ENCODE measurements at regions of chr9 and their contacts with region 1.

Region 1: GRCh38 chr9:99118782-99119466 is 14.0 kb downstream of the TGFBR1 start:
- DNase-seq: peak; percentile 81
- H3K4me3 ChIP-seq: peak overlapping the region; percentile 63
- H3K27ac ChIP-seq: peak overlapping the region; percentile 100
- H3K4me1 ChIP-seq: peaks cover 95% of the 10 kb centered on the region
- CTCF ChIP-seq: no peak

Region 2: GRCh38 chr9:99104459-99105151 is 14.3 kb before region 1 on chr9 and contains the start of gene TGFBR1:
- CTCF ChIA-PET with region 1: no interaction called
- POLR2A ChIA-PET with region 1: interaction called, 16 read pairs
- intact Hi-C with region 1: loop called (anchors 1 kb)
- DNase-seq: peak; percentile 95
- H3K4me3 ChIP-seq: peak within 1 kb of the TSS; percentile 78
- H3K27ac ChIP-seq: peak within 1 kb of the TSS; percentile 31
- H3K4me1 ChIP-seq: peaks cover 46% of the 10 kb centered on the region
- CTCF ChIP-seq: no peak
- total RNA-seq, gene TGFBR1: 13.6 and 14.3 TPM in 2 replicates

Region 3: GRCh38 chr9:99134893-99135341 is 16.0 kb after region 1 on chr9:
- CTCF ChIA-PET with region 1: no interaction called
- POLR2A ChIA-PET with region 1: interaction called, 53 read pairs
- intact Hi-C with region 1: no loop called
- DNase-seq: no peak
- H3K4me3 ChIP-seq: no peak overlapping the region
- H3K27ac ChIP-seq: no peak overlapping the region
- H3K4me1 ChIP-seq: peaks cover 46% of the 10 kb centered on the region
- CTCF ChIP-seq: no peak

Region 4: DNA sequence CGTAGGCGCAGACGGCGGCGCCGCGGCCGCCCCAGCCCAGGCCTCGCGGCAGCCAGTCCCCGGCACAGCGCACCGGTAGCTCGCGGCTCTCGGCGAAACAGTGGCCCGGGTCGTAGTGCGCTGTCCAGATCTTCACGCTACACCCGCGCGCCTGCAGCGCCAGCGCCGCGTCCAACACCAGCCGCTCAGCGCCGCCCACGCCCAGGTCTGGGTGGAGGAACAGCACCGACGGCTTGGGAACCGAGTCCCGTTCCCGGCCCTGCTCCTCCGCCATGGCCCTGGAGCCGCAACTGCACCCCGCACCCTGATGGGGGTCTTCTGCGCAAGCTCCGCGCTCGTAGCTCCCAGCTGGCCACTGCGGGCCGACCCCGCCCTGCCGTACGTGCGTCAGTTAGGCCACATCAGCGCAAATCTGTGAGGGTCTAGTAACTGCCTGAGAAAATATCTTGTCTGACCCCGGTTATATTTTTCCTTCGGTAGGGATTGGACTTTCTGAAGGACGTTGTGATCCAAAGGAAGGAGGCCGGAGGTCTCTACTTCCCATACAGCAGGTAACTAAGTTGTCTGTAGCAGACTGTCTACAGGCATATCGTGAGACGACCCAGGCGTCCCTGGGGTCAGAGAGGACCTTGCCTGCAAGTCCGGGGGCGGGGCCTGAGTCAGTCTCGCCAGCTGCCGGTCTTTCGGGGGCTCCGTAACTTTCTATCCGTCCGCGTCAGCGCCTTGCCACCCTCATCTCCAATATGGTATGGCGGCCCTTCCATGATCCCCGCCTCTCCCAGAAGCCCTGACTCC is 102.9 kb after region 1 on chr9 and contains the starts of genes ALG2 and SEC61B:
- CTCF ChIA-PET with region 1: no interaction called
- POLR2A ChIA-PET with region 1: interaction called, 5 read pairs
- intact Hi-C with region 1: loop called (anchors 5 kb)
- DNase-seq: peak; percentile 96
- H3K4me3 ChIP-seq: peak within 1 kb of the TSS; percentile 91
- H3K27ac ChIP-seq: peak within 1 kb of the TSS; percentile 72
- H3K4me1 ChIP-seq: peaks cover 35% of the 10 kb centered on the region
- CTCF ChIP-seq: no peak
- total RNA-seq, gene ALG2: 22.2 and 26.5 TPM in 2 replicates
- total RNA-seq, gene SEC61B: 97.5 and 106 TPM in 2 replicates

Region 5: DNA sequence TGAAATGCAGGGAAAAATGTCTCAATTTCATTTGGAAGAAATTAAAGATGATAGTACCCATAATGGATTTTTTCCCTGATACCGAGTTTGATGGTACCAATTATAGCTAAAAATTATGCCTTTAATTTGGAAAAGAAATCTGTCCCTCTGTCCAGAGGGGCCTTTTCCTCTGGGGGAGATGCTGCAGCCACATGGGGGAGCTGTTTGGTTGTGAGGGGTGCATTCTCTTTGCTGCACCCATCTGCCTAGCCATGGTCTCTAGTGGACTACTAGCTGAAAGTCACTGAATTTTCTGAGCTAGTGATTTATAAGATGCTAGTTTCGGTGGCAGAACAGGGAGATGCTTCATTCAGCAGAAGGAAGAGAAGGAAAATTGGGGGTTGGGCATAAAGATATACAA is 112.8 kb after region 1 on chr9:
- CTCF ChIA-PET with region 1: no interaction called
- POLR2A ChIA-PET with region 1: interaction called, 5 read pairs
- intact Hi-C with region 1: loop called (anchors 5 kb)
- DNase-seq: peak; percentile 58
- H3K4me3 ChIP-seq: no peak overlapping the region
- H3K27ac ChIP-seq: peak overlapping the region; percentile 6
- H3K4me1 ChIP-seq: peaks cover 59% of the 10 kb centered on the region
- CTCF ChIP-seq: peak; percentile 96

Region 6: DNA sequence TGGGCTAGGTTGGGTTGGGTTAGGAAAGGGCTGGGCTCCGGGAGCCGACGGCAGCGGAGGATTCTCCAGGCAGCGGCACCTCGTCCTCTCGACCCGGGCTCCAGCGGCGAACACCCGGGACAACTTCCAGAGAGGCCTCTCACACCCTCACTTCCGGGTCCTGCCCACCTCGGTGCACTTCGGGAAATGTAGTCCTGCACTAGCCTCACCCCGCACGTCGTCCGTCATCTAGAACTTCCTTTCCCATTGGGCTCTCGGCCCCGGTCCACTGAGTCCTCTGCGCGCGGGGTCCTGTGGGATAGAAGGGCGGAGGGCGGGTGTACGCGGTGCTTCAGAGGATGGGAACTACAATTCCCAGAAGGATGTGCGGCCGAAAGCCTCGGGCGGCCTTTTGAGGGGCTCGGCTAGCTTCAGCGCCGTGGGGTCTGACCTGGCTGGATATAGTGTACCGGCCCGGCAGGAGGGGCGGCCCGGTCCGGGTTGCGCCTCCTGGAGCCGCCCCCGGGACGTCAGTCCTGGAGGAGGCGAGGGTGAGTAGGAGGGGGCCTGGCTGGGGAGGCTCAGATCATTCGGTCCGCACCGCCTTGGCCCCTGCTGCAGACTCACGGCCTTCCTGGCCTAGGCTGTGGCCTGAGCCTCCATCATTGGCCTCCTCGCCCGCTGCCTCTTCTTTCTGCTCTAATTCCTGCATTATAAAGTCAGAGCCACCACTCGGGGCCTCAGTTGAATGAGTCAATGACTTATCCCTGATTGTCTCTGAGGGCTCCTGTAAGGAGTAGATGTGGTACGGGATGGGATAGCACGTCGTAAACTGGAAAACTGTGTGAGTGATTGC is 980.2 kb after region 1 on chr9 and contains the starts of genes ERP44 and INVS:
- CTCF ChIA-PET with region 1: no interaction called
- POLR2A ChIA-PET with region 1: no interaction called
- intact Hi-C with region 1: loop called (anchors 10 kb)
- DNase-seq: peak; percentile 99
- H3K4me3 ChIP-seq: peak within 1 kb of the TSS; percentile 97
- H3K27ac ChIP-seq: peak within 1 kb of the TSS; percentile 71
- H3K4me1 ChIP-seq: peaks cover 34% of the 10 kb centered on the region
- CTCF ChIP-seq: no peak
- total RNA-seq, gene ERP44: 15.0 and 19.3 TPM in 2 replicates
- total RNA-seq, gene INVS: 30.7 and 33.1 TPM in 2 replicates

Measured in OCI-LY7 (cell line).